ENCODE measurements at regions of chr9 and their contacts with region 1.

Region 1: DNA sequence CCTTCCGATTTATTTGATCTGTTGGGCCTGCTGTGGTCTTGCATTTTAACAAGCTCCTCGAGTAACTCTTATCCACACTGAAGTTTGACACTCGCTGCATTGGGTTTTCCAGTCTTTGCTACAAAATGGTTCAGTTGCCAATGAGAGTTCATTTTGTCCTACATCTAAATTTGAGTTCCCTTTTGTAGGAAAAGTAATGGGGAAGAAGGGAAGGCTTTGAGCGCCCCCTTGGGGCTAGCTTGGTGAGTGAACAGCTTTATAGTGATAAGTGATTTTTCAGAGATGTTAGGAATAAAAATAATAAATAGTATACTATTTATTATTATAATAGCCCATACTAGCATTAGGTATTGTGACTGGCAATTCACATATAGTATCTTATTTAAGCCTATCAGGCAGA is 89.9 kb upstream of the GNAQ start:
- DNase-seq: peak; percentile 57
- ATAC-seq: no peak
- H3K4me3 Mint-ChIP-seq: no peak overlapping the region
- H3K27ac Mint-ChIP-seq: no peak overlapping the region
- H3K4me1 Mint-ChIP-seq: peaks cover 13% of the 10 kb centered on the region
- H3K27me3 Mint-ChIP-seq: peaks cover 3% of the 10 kb centered on the region

Region 2: GRCh38 chr9:77935974-77936373 is 185.5 kb before region 1 on chr9:
- CTCF ChIA-PET with region 1: no interaction called
- DNase-seq: no peak
- ATAC-seq: no peak
- H3K4me3 Mint-ChIP-seq: no peak overlapping the region
- H3K27ac Mint-ChIP-seq: no peak overlapping the region
- H3K4me1 Mint-ChIP-seq: no peaks in the 10 kb centered on the region
- H3K27me3 Mint-ChIP-seq: no peaks in the 10 kb centered on the region

Region 3: GRCh38 chr9:77977210-77977611 is 144.3 kb before region 1 on chr9:
- CTCF ChIA-PET with region 1: interaction called, 28 read pairs
- DNase-seq: peak; percentile 69
- ATAC-seq: peak; percentile 63
- H3K4me3 Mint-ChIP-seq: no peak overlapping the region
- H3K27ac Mint-ChIP-seq: peak overlapping the region; percentile 47
- H3K4me1 Mint-ChIP-seq: peaks cover 52% of the 10 kb centered on the region
- H3K27me3 Mint-ChIP-seq: no peaks in the 10 kb centered on the region

Region 4: DNA sequence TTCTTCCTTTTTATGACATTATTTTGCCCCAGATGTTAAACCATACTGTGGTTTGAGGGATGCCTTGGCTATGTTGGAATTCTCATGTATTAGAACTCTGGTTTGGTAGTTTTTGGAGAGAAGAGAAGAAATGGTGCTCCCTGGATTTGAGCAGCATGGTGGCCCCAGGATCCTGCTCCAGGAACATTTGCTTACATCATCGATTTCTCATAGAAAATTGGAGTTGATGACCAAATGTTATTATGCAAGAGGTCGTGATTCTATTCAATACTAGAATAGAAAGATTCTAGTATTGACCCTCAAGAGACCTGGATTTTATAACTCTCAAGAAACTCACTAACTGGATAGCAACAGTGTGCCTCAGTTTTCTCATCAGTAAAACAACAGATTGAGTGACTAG is 12.4 kb before region 1 on chr9:
- CTCF ChIA-PET with region 1: no interaction called
- DNase-seq: no peak
- ATAC-seq: no peak
- H3K4me3 Mint-ChIP-seq: no peak overlapping the region
- H3K27ac Mint-ChIP-seq: no peak overlapping the region
- H3K4me1 Mint-ChIP-seq: peaks cover 15% of the 10 kb centered on the region
- H3K27me3 Mint-ChIP-seq: no peaks in the 10 kb centered on the region

Region 5: GRCh38 chr9:78132701-78133058 is 11.2 kb after region 1 on chr9:
- CTCF ChIA-PET with region 1: interaction called, 10 read pairs
- DNase-seq: no peak
- ATAC-seq: peak; percentile 76
- H3K4me3 Mint-ChIP-seq: peak overlapping the region; percentile 41
- H3K27ac Mint-ChIP-seq: peak overlapping the region; percentile 73
- H3K4me1 Mint-ChIP-seq: peaks cover 19% of the 10 kb centered on the region
- H3K27me3 Mint-ChIP-seq: peaks cover 8% of the 10 kb centered on the region

Measured in activated CD8-positive, alpha-beta memory T cell treated with anti-CD3 and anti-CD28 coated beads, Interleukin-2, amount 10 ng/mL, durations not matched to agents 7 days and 5 days (primary cell).